ENCODE measurements at regions of chr6 and their contacts with region 1.

Region 1: DNA sequence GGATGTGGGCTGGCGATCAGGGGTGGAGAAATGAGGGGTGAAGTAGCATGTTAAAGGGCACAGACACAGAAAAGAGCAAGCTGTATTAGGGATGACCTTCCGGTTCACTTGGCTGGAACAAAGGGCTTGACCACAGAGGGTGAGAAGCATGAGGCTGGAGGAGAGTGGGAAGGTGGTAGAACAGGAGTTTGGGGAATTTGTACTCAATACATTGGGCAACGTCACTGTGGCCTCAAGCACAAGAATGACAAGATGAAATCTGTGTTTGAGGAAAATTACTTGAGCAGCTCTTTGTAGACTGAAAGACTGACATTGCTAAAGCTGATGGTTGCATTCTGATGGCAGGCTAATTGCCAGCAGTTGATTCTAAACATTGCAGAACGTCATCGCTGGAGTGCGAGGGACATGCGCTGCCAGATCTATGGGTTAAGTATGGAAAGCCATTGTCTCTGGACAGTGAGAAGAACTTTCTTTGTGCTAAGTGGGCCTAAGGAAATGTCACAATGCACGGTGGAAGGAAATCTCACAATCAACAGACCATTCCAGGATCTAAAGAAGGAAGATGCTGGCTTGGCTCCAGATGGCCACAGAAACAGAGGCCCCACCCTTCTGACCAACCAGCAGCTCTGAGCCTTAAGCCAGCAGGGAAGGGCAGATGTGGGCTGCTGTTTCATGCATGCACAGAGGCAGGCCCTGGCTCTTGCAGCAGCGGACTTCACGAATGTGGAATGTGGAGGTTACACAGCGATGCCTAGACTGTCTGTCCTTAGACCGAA is 156.1 kb downstream of the SOBP start:
- DNase-seq: no peak
- ATAC-seq: no peak
- H3K4me3 Mint-ChIP-seq: no peak overlapping the region
- H3K27ac Mint-ChIP-seq: no peak overlapping the region
- H3K4me1 Mint-ChIP-seq: peaks cover 65% of the 10 kb centered on the region
- H3K27me3 Mint-ChIP-seq: no peaks in the 10 kb centered on the region
- CTCF ChIP-seq: no peak

Region 2: DNA sequence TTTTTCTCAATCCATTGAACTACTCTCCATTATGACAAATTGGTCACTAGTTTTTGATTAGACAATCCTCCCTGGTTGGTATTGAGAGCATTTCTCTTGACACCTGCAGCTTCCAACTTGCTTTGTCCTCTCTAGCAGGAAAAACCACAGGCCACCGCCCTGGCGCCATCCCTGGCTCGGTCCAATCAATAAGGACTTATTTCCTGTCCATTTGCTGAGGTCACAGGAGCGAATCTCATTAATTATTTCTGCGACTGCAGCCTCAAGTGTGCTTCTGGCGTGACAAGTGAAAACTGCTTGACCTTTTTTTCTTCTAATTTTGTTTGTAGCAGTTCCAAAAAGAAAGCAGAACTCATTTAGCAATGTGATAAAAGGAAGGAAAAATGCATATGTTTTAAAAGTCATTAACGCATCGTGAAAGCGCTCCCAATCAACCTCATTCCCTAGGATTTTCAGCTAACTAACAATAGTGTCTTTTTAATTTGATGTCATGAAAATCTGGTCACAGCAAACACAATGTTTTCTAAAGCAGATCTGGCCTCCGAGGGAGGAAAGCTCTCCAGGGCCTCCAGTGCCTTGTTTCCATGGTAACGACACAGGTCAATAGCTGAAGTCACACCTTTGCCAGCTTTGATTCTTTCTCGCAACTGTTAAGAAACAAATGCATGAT is 491.7 kb before region 1 on chr6:
- CTCF ChIA-PET with region 1: no interaction called
- POLR2A ChIA-PET with region 1: interaction called, 10 read pairs
- intact Hi-C with region 1: no loop called
- DNase-seq: no peak
- ATAC-seq: no peak
- H3K4me3 Mint-ChIP-seq: no peak overlapping the region
- H3K27ac Mint-ChIP-seq: no peak overlapping the region
- H3K4me1 Mint-ChIP-seq: peaks cover 1% of the 10 kb centered on the region
- H3K27me3 Mint-ChIP-seq: no peaks in the 10 kb centered on the region
- CTCF ChIP-seq: no peak

Region 3: GRCh38 chr6:107318100-107318736 is 327.8 kb before region 1 on chr6:
- CTCF ChIA-PET with region 1: no interaction called
- POLR2A ChIA-PET with region 1: no interaction called
- intact Hi-C with region 1: no loop called
- DNase-seq: no peak
- ATAC-seq: peak; percentile 85
- H3K4me3 Mint-ChIP-seq: no peak overlapping the region
- H3K27ac Mint-ChIP-seq: no peak overlapping the region
- H3K4me1 Mint-ChIP-seq: peaks cover 15% of the 10 kb centered on the region
- H3K27me3 Mint-ChIP-seq: no peaks in the 10 kb centered on the region
- CTCF ChIP-seq: no peak

Region 4: GRCh38 chr6:107493158-107494057 is 152.6 kb before region 1 on chr6:
- CTCF ChIA-PET with region 1: no interaction called
- POLR2A ChIA-PET with region 1: no interaction called
- intact Hi-C with region 1: no loop called
- DNase-seq: no peak
- ATAC-seq: no peak
- H3K4me3 Mint-ChIP-seq: no peak overlapping the region
- H3K27ac Mint-ChIP-seq: no peak overlapping the region
- H3K4me1 Mint-ChIP-seq: peaks cover 18% of the 10 kb centered on the region
- H3K27me3 Mint-ChIP-seq: peaks cover 10% of the 10 kb centered on the region
- CTCF ChIP-seq: no peak

Region 5: DNA sequence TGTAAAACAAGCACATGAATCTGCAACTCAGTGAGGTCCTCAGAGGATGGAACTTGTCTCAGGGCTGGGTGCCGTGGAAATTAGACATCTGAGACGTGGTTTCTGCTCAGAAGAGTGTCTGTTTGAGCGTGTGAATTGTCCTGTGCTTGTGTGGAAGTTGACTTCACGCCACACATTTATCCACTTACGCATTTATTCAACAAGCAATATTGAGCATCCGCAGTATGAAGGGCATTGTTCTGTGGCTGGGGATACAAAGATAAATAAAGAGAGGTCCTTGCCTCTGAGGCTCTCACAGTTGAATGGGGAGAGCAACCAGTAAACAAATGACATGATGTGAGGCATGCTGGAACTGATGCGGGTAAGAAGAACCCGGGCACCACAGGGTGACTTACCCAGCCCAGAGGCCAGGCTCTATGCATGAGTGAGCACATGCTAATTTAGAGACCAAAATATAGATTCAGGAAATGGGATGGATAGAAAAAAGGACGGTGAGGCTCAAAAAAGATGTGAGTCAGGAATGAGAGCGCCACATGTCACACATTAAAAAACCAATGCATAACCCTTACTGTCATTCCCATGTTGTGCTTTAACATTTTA is 95.6 kb before region 1 on chr6:
- CTCF ChIA-PET with region 1: no interaction called
- POLR2A ChIA-PET with region 1: no interaction called
- intact Hi-C with region 1: no loop called
- DNase-seq: no peak
- ATAC-seq: peak; percentile 72
- H3K4me3 Mint-ChIP-seq: peak overlapping the region; percentile 38
- H3K27ac Mint-ChIP-seq: peak overlapping the region; percentile 35
- H3K4me1 Mint-ChIP-seq: peaks cover 18% of the 10 kb centered on the region
- H3K27me3 Mint-ChIP-seq: no peaks in the 10 kb centered on the region
- CTCF ChIP-seq: no peak

Region 6: DNA sequence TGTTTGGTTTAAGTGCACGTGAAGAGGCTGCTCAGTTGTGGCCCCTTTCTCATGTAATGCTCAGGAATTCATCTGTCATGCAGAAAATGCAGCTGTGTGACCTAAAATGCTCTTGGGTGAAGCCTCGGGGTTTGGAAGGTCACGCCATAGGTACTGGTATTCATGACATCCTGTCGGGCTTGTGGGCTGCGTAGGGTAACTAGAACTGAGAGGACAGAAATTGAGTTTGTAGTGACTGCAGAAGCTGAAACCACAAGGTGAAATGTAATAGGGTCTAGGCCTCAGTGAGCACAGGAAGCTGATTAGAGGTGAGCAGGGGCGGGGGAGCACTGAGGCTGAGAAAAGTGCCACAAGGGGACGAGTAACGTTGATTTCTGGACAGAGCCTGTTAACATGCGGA is 27.3 kb before region 1 on chr6:
- CTCF ChIA-PET with region 1: no interaction called
- POLR2A ChIA-PET with region 1: no interaction called
- intact Hi-C with region 1: loop called (anchors 2 kb)
- DNase-seq: no peak
- ATAC-seq: peak; percentile 94
- H3K4me3 Mint-ChIP-seq: no peak overlapping the region
- H3K27ac Mint-ChIP-seq: no peak overlapping the region
- H3K4me1 Mint-ChIP-seq: peaks cover 38% of the 10 kb centered on the region
- H3K27me3 Mint-ChIP-seq: no peaks in the 10 kb centered on the region
- CTCF ChIP-seq: no peak

Region 7: GRCh38 chr6:108002365-108003221 is 356.6 kb after region 1 on chr6:
- CTCF ChIA-PET with region 1: no interaction called
- POLR2A ChIA-PET with region 1: no interaction called
- intact Hi-C with region 1: no loop called
- DNase-seq: no peak
- ATAC-seq: no peak
- H3K4me3 Mint-ChIP-seq: no peak overlapping the region
- H3K27ac Mint-ChIP-seq: no peak overlapping the region
- H3K4me1 Mint-ChIP-seq: no peaks in the 10 kb centered on the region
- H3K27me3 Mint-ChIP-seq: no peaks in the 10 kb centered on the region
- CTCF ChIP-seq: no peak